Activated CD8-positive, alpha-beta T cell treated with anti-CD3 and anti-CD28 coated beads, Interleukin-2, amount 10 ng/mL, durations not matched to agents 7 days and 5 days (primary cell): ENCODE measurements at regions of chr15 and their contacts with region 1.

Region 1: DNA sequence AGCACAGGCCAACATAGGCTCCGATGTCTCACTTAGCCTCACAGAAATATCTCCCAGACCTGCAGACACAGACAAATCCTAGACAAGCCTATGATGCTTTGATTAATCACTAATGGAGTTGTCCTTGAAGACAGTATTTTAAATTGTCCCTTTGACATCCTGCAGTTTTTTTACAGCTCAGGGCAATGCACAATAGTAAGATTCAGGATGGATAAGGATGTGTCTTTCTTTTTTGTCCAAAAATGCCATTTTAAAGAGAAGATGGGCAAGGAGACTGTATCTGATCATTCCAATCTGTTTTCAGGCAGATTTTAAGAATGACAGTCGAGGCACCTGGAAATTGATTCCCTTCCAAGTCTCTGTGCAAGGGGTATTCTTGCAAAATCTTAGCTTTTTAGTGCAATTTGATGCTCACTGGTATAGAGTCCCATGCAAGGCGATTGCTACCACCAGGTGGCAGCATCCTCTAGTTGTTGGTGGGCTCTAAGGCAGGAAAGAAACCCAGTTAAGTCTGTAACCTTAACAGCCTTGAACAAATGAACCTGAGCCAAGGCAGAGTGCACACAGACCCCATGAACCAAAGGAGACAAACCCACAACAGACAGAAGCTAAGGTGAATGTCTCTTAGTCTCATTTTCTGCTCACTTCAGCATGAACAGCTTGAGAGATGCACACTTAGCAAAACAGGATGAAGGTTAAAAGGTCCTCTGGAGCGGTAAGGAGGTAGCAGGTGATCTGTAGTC is 51.2 kb upstream of the MINAR1 start:
- DNase-seq: peak; percentile 82
- ATAC-seq: peak; percentile 88
- H3K4me3 Mint-ChIP-seq: no peak overlapping the region
- H3K27ac Mint-ChIP-seq: no peak overlapping the region
- H3K4me1 Mint-ChIP-seq: no peaks in the 10 kb centered on the region
- H3K27me3 Mint-ChIP-seq: no peaks in the 10 kb centered on the region

Region 2: GRCh38 chr15:79221691-79222090 is 159.2 kb before region 1 on chr15:
- CTCF ChIA-PET with region 1: no interaction called
- POLR2A ChIA-PET with region 1: no interaction called
- DNase-seq: no peak
- ATAC-seq: no peak
- H3K4me3 Mint-ChIP-seq: no peak overlapping the region
- H3K27ac Mint-ChIP-seq: no peak overlapping the region
- H3K4me1 Mint-ChIP-seq: no peaks in the 10 kb centered on the region
- H3K27me3 Mint-ChIP-seq: peaks cover 7% of the 10 kb centered on the region

Region 3: DNA sequence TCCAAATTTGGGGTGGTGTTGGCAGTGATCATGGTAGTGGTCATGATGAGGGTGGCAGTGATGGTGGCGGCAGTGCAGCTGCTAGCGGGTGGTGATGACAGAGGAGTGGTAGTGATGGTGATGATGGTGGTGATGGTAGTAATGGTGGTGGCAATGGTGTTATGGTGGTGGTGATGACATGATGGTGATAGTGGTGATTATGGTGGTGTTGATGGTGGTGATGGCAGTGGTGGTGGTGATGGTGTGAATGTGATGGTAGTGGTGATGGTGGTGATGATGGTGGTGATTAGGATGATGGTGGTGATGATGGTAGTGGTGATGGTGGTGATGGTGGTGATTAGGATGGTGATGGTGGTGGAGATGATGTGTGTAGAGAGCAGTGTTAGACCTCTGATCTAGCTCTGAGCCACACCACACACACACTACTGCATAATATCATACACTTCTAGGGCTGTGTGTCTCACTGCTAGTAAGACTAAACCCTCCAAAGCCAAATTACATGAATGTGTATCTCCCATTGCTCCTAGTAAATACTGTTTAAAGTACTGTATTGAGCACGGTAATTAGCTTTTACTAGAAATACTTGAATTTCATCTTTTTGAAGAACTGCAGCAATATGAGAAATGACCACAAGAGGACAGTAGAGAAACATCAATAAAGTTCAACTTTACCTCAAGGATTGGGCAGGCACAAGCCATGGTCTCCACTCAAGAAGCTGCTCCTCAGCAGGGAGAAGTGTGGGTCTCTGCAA is 41.2 kb before region 1 on chr15:
- CTCF ChIA-PET with region 1: interaction called, 27 read pairs
- POLR2A ChIA-PET with region 1: no interaction called
- DNase-seq: no peak
- ATAC-seq: no peak
- H3K4me3 Mint-ChIP-seq: no peak overlapping the region
- H3K27ac Mint-ChIP-seq: no peak overlapping the region
- H3K4me1 Mint-ChIP-seq: no peaks in the 10 kb centered on the region
- H3K27me3 Mint-ChIP-seq: no peaks in the 10 kb centered on the region

Region 4: GRCh38 chr15:79394231-79394630 is 13.3 kb after region 1 on chr15:
- CTCF ChIA-PET with region 1: interaction called, 32 read pairs
- POLR2A ChIA-PET with region 1: no interaction called
- DNase-seq: no peak
- ATAC-seq: no peak
- H3K4me3 Mint-ChIP-seq: no peak overlapping the region
- H3K27ac Mint-ChIP-seq: no peak overlapping the region
- H3K4me1 Mint-ChIP-seq: no peaks in the 10 kb centered on the region
- H3K27me3 Mint-ChIP-seq: no peaks in the 10 kb centered on the region

Region 5: GRCh38 chr15:79561982-79562381 is 181.1 kb after region 1 on chr15:
- CTCF ChIA-PET with region 1: no interaction called
- POLR2A ChIA-PET with region 1: no interaction called
- DNase-seq: no peak
- ATAC-seq: no peak
- H3K4me3 Mint-ChIP-seq: no peak overlapping the region
- H3K27ac Mint-ChIP-seq: no peak overlapping the region
- H3K4me1 Mint-ChIP-seq: no peaks in the 10 kb centered on the region
- H3K27me3 Mint-ChIP-seq: peaks cover 9% of the 10 kb centered on the region

Region 6: GRCh38 chr15:79596051-79596507 is 215.2 kb after region 1 on chr15:
- CTCF ChIA-PET with region 1: interaction called, 169 read pairs
- POLR2A ChIA-PET with region 1: no interaction called
- DNase-seq: peak; percentile 76
- ATAC-seq: peak; percentile 99
- H3K4me3 Mint-ChIP-seq: no peak overlapping the region
- H3K27ac Mint-ChIP-seq: no peak overlapping the region
- H3K4me1 Mint-ChIP-seq: no peaks in the 10 kb centered on the region
- H3K27me3 Mint-ChIP-seq: peaks cover 9% of the 10 kb centered on the region